Astrocyte of the cerebellum (primary cell): ENCODE measurements at regions of chr5 and their contacts with region 1.

Region 1: DNA sequence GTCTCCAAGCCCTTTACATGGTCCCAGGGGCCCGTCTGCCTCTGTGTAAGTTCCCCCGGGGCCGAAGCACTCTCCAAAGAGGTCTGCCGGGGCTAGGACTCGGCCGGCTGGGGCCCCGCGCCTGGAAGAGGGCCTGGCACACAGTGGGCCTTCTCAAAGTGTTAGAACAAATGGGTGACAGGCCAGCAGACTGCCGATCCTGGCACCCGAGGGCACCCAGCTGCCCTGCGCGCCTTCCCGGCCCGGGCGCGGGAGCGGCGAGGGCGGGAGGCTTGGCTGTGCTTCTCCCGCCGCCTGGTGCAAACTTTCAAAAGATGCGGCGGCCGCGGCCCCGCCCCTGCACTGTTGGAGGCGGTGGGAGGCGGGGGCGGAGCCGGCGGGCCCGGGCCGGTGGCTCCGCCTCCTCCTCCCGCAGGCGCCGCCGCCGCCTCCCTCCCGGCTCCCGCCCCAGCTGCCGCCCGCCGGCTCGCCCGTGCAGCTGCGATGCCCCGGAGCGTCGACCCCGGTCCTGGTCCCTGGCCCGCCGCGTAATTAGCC is at the start of gene NEURL1B:
- DNase-seq: no peak
- H3K4me3 ChIP-seq: peak within 1 kb of the TSS; percentile 51
- CTCF ChIP-seq: no peak

Region 2: DNA sequence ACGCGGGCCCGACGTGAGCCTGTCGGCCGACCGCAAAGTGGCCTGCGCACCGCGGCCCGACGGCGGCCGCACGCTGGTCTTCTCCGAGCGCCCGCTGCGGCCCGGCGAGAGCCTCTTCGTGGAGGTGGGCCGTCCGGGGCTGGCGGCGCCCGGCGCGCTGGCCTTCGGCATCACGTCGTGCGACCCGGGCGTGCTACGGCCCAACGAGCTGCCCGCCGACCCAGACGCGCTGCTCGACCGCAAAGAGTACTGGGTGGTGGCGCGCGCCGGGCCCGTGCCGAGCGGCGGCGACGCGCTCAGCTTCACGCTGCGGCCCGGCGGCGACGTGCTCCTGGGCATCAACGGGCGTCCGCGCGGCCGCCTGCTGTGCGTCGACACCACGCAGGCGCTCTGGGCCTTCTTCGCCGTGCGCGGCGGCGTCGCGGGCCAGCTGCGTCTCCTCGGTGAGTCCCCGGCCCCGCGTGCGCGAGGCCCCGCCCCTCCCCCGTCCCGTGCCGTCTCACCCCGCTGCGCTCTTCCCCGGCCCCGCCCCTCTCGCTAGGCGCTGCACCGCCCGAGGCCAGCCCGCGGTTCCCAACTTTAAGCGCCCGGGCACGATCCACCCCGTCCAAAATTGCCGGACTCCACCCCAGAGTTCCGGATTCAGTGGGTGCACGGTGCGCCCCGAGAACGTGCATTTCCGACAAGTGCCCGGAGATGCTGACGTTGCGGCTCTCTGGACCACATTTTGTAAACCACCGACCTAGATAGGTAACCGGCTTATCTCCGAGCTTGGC is 43.0 kb after region 1 on chr5:
- in situ Hi-C with region 1: loop called (anchors 5 kb)
- DNase-seq: no peak
- H3K4me3 ChIP-seq: no peak overlapping the region
- CTCF ChIP-seq: no peak